ENCODE measurements at regions of chr17 and their contacts with region 1.

Region 1: GRCh38 chr17:20141198-20141972 is 132.2 kb downstream of the SPECC1 start:
- DNase-seq: no peak
- H3K4me3 ChIP-seq: no peak overlapping the region
- H3K27ac ChIP-seq: no peak overlapping the region
- H3K4me1 ChIP-seq: no peaks in the 10 kb centered on the region
- H3K27me3 ChIP-seq: no peaks in the 10 kb centered on the region
- CTCF ChIP-seq: no peak

Region 2: GRCh38 chr17:19362277-19363113 is 778.9 kb before region 1 on chr17 and contains the start of gene B9D1:
- CTCF ChIA-PET with region 1: no interaction called
- POLR2A ChIA-PET with region 1: no interaction called
- intact Hi-C with region 1: no loop called
- DNase-seq: peak; percentile 83 to 93
- H3K4me3 ChIP-seq: peak within 1 kb of the TSS; percentile 86
- H3K27ac ChIP-seq: peak within 1 kb of the TSS; percentile 85
- H3K4me1 ChIP-seq: peaks cover 13% of the 10 kb centered on the region
- H3K27me3 ChIP-seq: no peaks in the 10 kb centered on the region
- CTCF ChIP-seq: peak; percentile 97
- total RNA-seq, gene B9D1: 40.2 and 58.7 TPM in 2 replicates

Region 3: DNA sequence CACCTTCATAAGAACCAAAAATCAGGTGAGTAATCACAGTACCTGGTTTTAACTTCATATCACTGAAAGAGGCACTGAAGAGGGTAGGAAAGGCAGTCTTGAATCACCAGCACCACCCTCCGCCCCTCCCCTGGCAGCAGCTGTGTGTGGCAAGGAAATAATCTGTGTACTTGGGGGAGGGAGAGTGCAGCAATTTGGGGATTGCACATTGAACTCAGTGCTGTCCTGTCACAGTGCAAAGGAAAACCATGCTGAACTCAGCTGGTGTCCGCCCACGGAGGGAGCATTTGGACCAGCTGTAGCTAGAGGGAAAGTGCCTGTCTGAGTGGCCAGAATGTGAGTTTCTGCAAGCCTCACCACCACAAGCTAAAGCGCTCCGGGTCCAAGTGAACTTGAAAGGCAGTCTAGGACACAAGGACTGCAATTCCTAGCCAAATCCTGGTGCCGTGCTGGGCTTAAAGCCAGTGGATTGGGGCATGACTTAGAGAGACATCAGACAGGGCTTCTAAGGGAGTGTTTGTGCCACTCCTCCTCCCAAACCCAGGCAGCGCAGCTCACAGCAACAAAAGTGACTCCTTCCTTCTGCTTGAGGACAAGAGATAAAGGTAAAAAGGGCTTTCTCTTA is 353.5 kb before region 1 on chr17:
- CTCF ChIA-PET with region 1: no interaction called
- POLR2A ChIA-PET with region 1: interaction called, 14 read pairs
- intact Hi-C with region 1: no loop called
- DNase-seq: no peak
- H3K4me3 ChIP-seq: no peak overlapping the region
- H3K27ac ChIP-seq: no peak overlapping the region
- H3K4me1 ChIP-seq: no peaks in the 10 kb centered on the region
- H3K27me3 ChIP-seq: no peaks in the 10 kb centered on the region
- CTCF ChIP-seq: no peak

Region 4: GRCh38 chr17:20083460-20083859 is 57.9 kb before region 1 on chr17:
- CTCF ChIA-PET with region 1: no interaction called
- POLR2A ChIA-PET with region 1: no interaction called
- intact Hi-C with region 1: no loop called
- DNase-seq: no peak
- H3K4me3 ChIP-seq: no peak overlapping the region
- H3K27ac ChIP-seq: no peak overlapping the region
- H3K4me1 ChIP-seq: 0 out of 2 replicates have a peak, but pooled peaks cover 5% of the 10 kb centered on the region
- H3K27me3 ChIP-seq: no peaks in the 10 kb centered on the region
- CTCF ChIP-seq: no peak

Region 5: GRCh38 chr17:20300436-20300934 is 159.1 kb after region 1 on chr17:
- CTCF ChIA-PET with region 1: no interaction called
- POLR2A ChIA-PET with region 1: interaction called, 13 read pairs
- intact Hi-C with region 1: no loop called
- DNase-seq: no peak
- H3K4me3 ChIP-seq: no peak overlapping the region
- H3K27ac ChIP-seq: no peak overlapping the region
- H3K4me1 ChIP-seq: no peaks in the 10 kb centered on the region
- H3K27me3 ChIP-seq: no peaks in the 10 kb centered on the region
- CTCF ChIP-seq: no peak